AG04449 (cell line): ENCODE measurements at regions of chr14 and their contacts with region 1.

Region 1: GRCh38 chr14:21136024-21136423 is 19.8 kb downstream of the OR5AU1 start:
- DNase-seq: no peak
- H3K4me3 ChIP-seq: no peak overlapping the region
- CTCF ChIP-seq: peak; percentile 24

Region 2: GRCh38 chr14:21121106-21121505 is 14.9 kb before region 1 on chr14:
- CTCF ChIA-PET with region 1: interaction called, 22 read pairs
- POLR2A ChIA-PET with region 1: no interaction called
- DNase-seq: no peak
- H3K4me3 ChIP-seq: no peak overlapping the region
- CTCF ChIP-seq: no peak

Region 3: GRCh38 chr14:21149641-21150367 is 13.8 kb after region 1 on chr14:
- CTCF ChIA-PET with region 1: interaction called, 18 read pairs
- POLR2A ChIA-PET with region 1: no interaction called
- DNase-seq: no peak
- H3K4me3 ChIP-seq: no peak overlapping the region
- CTCF ChIP-seq: no peak